CD14-positive monocyte (primary cell): ENCODE measurements at regions of chr18 and their contacts with region 1.

Region 1: DNA sequence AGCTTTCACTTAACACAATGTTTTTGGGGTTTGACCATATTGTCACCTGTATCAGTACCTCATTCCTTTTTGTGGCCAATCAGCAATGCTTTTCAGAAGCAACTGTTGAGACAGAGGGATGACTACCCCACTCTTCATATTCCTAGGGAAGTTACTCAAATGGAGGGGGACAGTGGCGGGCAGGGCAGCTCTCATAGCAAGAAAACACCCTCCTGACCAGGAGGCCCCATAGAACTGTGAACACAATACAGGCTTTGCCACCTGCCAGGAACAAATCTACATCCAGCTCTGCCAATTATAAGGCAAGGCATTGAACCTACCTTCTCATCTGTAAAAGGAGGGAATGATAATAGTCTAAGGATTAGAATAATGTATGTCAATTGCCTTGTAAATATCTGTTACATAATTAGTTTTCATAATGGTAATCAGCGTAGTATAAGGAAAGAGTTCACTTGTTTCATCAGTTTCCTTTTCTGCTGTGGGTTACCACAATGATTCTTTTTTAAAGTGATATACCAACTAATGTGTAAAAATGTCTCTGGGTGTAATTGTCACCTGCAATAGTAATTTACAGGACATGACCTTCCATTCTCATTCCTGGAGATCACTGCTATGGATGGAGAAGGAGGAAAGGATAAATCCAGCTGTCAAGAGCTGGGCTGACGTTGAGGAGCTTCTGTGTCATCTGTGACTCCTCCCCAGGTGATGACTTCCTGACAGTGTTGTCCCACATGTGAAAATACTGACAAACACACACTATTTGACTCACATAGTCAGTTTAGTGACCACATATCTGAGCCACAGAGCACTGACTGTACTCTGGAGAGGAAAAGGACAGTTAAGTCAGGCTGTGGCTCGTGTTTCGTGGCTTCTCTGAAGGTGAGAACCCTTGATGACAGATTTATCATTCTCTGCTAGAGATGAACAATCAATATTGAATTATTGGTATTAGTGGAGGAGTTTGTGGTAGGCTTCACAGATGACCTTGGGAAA is 13.5 kb downstream of the ALPK2 start:
- DNase-seq: peak; percentile 59 to 87 (median 62)
- H3K4me3 ChIP-seq: no peak overlapping the region
- H3K4me3 Mint-ChIP-seq: peak overlapping the region in 1 of 2 donors; percentile 45
- H3K27ac ChIP-seq: peak overlapping the region in 1 of 2 donors; percentile 37
- H3K27ac Mint-ChIP-seq: peak overlapping the region in 6 of 7 donors; percentile 37 to 86 (median 76)
- H3K4me1 ChIP-seq: peaks cover 15 to 20% of the 10 kb centered on the region in 2 donors
- H3K4me1 Mint-ChIP-seq: peaks cover 25% of the 10 kb centered on the region
- H3K27me3 ChIP-seq: no peaks in the 10 kb centered on the region
- H3K27me3 Mint-ChIP-seq: peaks cover 2 to 4% (median 2%) of the 10 kb centered on the region in 3 donors
- CTCF ChIP-seq: no peak

Region 2: DNA sequence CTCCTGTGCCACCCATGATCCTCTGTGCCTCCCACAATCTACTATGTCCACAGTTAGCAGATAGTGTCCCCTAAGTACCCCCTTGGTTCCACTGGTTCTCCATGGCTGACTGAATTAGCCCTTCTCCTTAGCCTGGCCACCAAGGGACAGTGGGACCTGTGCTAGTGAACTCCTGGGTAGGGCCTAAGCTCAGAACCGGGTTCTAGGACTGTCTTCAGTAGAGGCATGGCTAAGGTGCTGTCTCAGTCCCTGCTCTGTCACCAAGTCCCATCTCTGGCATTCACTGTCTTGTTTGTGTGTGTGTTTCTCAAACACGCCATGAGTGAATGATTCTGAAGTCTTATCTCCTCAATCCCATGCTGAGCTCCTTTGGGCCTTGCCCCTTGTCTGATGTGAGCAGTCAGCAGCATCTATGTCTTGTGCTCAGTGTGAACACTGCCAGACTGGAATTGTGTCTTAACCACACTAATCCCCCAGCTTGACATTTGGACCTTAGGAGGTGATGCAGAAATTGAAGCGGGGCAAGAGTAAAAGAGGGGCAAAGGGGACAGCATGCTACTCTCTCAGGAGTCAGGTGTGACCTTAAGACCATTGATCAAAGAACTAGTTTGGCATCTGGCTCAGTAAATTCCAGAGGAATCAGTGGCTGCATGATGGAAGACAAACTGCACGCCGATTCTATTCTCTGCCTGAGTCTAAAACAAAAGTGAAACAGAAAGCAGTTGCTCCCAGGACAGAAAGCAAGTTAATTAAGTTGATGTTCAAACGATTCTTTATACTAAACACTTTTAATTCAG is 177.1 kb before region 1 on chr18:
- intact Hi-C with region 1: no loop called
- DNase-seq: no peak
- H3K4me3 ChIP-seq: peak overlapping the region; percentile 6 to 66 (median 62)
- H3K4me3 Mint-ChIP-seq: peak overlapping the region; percentile 66 to 93
- H3K27ac ChIP-seq: peak overlapping the region in 1 of 2 donors; percentile 29
- H3K27ac Mint-ChIP-seq: peak overlapping the region in 4 of 7 donors; percentile 12 to 68 (median 31)
- H3K4me1 ChIP-seq: peaks cover 0 to 5% of the 10 kb centered on the region in 2 donors
- H3K4me1 Mint-ChIP-seq: peaks cover 11% of the 10 kb centered on the region
- H3K27me3 ChIP-seq: no peaks in the 10 kb centered on the region
- H3K27me3 Mint-ChIP-seq: peaks cover 0 to 5% (median 1%) of the 10 kb centered on the region in 3 donors
- CTCF ChIP-seq: no peak

Region 3: GRCh38 chr18:58520969-58521368 is 94.5 kb before region 1 on chr18:
- intact Hi-C with region 1: no loop called
- DNase-seq: peak; percentile 44 to 81 (median 49)
- H3K4me3 ChIP-seq: no peak overlapping the region
- H3K4me3 Mint-ChIP-seq: no peak overlapping the region
- H3K27ac ChIP-seq: no peak overlapping the region
- H3K27ac Mint-ChIP-seq: peak overlapping the region in 1 of 7 donors; percentile 37
- H3K4me1 ChIP-seq: no peaks in the 10 kb centered on the region
- H3K4me1 Mint-ChIP-seq: peaks cover 16% of the 10 kb centered on the region
- H3K27me3 ChIP-seq: no peaks in the 10 kb centered on the region
- H3K27me3 Mint-ChIP-seq: peaks cover 0 to 6% (median 4%) of the 10 kb centered on the region in 3 donors
- CTCF ChIP-seq: no peak

Region 4: GRCh38 chr18:58567453-58568196 is 47.8 kb before region 1 on chr18:
- intact Hi-C with region 1: loop called in 1 of 2 experiments (anchors 5 kb)
- DNase-seq: no peak
- H3K4me3 ChIP-seq: no peak overlapping the region
- H3K4me3 Mint-ChIP-seq: no peak overlapping the region
- H3K27ac ChIP-seq: no peak overlapping the region
- H3K27ac Mint-ChIP-seq: peak overlapping the region in 1 of 7 donors; percentile 70
- H3K4me1 ChIP-seq: peaks cover 20 to 39% of the 10 kb centered on the region in 2 donors
- H3K4me1 Mint-ChIP-seq: peaks cover 24% of the 10 kb centered on the region
- H3K27me3 ChIP-seq: no peaks in the 10 kb centered on the region
- H3K27me3 Mint-ChIP-seq: peaks cover 5 to 9% (median 7%) of the 10 kb centered on the region in 3 donors
- CTCF ChIP-seq: no peak

Region 5: GRCh38 chr18:58646334-58646862 is 31.0 kb after region 1 on chr18:
- intact Hi-C with region 1: no loop called
- DNase-seq: no peak
- H3K4me3 ChIP-seq: no peak overlapping the region
- H3K4me3 Mint-ChIP-seq: no peak overlapping the region
- H3K27ac ChIP-seq: no peak overlapping the region
- H3K27ac Mint-ChIP-seq: no peak overlapping the region
- H3K4me1 ChIP-seq: peaks cover 26 to 28% of the 10 kb centered on the region in 2 donors
- H3K4me1 Mint-ChIP-seq: peaks cover 26% of the 10 kb centered on the region
- H3K27me3 ChIP-seq: no peaks in the 10 kb centered on the region
- H3K27me3 Mint-ChIP-seq: no peaks in the 10 kb centered on the region
- CTCF ChIP-seq: no peak

Region 6: DNA sequence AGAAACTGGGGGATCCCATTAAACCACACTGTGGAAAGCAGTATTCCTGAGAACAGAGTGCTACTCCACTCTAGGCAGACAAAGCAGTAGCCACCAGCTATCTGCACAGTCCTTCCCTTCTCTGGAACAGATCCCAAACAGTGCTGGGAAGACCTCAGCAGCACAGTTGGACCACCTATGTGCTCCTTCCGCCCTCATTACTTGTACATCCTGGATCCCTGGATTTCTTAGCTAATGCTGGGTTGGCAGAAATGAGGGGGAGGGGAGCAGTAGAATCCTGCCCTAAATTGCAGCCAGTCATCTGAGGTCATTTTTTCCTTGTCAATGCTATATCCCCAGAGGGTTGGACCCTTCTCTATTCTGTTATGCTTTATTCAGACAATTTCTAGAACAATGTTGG is 42.1 kb after region 1 on chr18:
- intact Hi-C with region 1: loop called in 1 of 2 experiments (anchors 5 kb)
- DNase-seq: no peak
- H3K4me3 ChIP-seq: peak overlapping the region in 1 of 3 experiments; percentile 55
- H3K4me3 Mint-ChIP-seq: peak overlapping the region in 1 of 2 donors; percentile 88
- H3K27ac ChIP-seq: peak overlapping the region in 1 of 2 donors; percentile 66
- H3K27ac Mint-ChIP-seq: peak overlapping the region in 6 of 7 donors; percentile 80 to 91 (median 88)
- H3K4me1 ChIP-seq: peaks cover 23 to 28% of the 10 kb centered on the region in 2 donors
- H3K4me1 Mint-ChIP-seq: peaks cover 31% of the 10 kb centered on the region
- H3K27me3 ChIP-seq: no peaks in the 10 kb centered on the region
- H3K27me3 Mint-ChIP-seq: peaks cover 0 to 2% (median 2%) of the 10 kb centered on the region in 3 donors
- CTCF ChIP-seq: no peak